Heart right ventricle (tissue), 16 donors: ENCODE measurements at regions of chr9 and their contacts with region 1.

Region 1: DNA sequence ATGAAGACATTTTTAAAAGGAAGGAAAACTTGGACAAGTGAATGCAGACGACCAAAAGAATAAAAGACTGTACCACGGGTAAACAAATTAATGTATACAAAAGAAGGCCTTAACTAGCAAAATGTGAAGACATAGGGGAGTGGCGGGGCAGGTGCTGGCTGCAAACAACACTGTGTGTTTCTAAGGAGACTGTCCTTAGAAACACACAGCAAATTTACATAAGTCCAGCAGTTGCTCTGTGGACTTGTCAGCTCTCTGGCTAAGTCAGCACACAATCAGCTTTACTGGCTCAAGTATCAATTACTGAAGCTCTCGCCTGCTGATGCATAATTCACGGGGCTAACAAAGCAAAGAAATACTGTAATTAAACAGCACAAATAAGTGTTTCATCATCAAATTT is 24.8 kb downstream of the PTBP3 start:
- DNase-seq: no peak
- ATAC-seq: no peak
- H3K4me3 ChIP-seq: no peak overlapping the region
- H3K27ac ChIP-seq: no peak overlapping the region
- H3K4me1 ChIP-seq: peaks cover 0 to 20% (median under 1%) of the 10 kb centered on the region in 9 donors
- H3K27me3 ChIP-seq: no peaks in the 10 kb centered on the region
- CTCF ChIP-seq: no peak

Region 2: GRCh38 chr9:111783857-111784256 is 524.7 kb before region 1 on chr9:
- intact Hi-C with region 1: no loop called
- DNase-seq: no peak
- ATAC-seq: no peak
- H3K4me3 ChIP-seq: no peak overlapping the region
- H3K27ac ChIP-seq: no peak overlapping the region
- H3K4me1 ChIP-seq: peaks cover 0 to 3% (median 0%) of the 10 kb centered on the region in 9 donors
- H3K27me3 ChIP-seq: no peaks in the 10 kb centered on the region
- CTCF ChIP-seq: no peak

Region 3: GRCh38 chr9:112249277-112249676 is 59.3 kb before region 1 on chr9:
- intact Hi-C with region 1: loop called in 1 of 10 experiments (anchors 10 kb)
- DNase-seq: no peak
- ATAC-seq: no peak
- H3K4me3 ChIP-seq: no peak overlapping the region
- H3K27ac ChIP-seq: no peak overlapping the region
- H3K4me1 ChIP-seq: peaks cover 0 to 20% (median 0%) of the 10 kb centered on the region in 9 donors
- H3K27me3 ChIP-seq: no peaks in the 10 kb centered on the region
- CTCF ChIP-seq: no peak

Region 4: DNA sequence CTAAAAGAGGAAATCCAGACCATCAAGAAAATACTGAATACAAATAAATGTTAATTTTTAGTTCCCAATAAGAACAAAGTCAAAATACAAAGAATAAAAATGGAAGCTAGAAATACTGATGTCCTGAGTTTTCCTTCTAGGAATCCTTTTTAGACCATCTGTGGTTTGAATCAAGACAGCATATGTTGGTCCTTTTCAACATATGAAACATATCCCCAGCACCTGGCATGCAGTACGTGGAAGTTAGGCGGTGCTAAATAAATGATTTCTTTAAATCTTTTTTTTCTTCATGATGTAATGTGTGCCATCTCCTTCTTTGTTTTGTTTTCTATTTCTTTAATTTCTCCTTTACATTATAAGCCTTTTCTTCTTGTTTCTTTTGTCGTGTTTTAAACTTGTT is 212.1 kb after region 1 on chr9:
- intact Hi-C with region 1: no loop called
- DNase-seq: no peak
- ATAC-seq: no peak
- H3K4me3 ChIP-seq: no peak overlapping the region
- H3K27ac ChIP-seq: no peak overlapping the region
- H3K4me1 ChIP-seq: no peaks in the 10 kb centered on the region
- H3K27me3 ChIP-seq: no peaks in the 10 kb centered on the region
- CTCF ChIP-seq: no peak